Left cardiac atrium (tissue), 4 donors: ENCODE measurements at regions of chr16 and their contacts with region 1.

Region 1: DNA sequence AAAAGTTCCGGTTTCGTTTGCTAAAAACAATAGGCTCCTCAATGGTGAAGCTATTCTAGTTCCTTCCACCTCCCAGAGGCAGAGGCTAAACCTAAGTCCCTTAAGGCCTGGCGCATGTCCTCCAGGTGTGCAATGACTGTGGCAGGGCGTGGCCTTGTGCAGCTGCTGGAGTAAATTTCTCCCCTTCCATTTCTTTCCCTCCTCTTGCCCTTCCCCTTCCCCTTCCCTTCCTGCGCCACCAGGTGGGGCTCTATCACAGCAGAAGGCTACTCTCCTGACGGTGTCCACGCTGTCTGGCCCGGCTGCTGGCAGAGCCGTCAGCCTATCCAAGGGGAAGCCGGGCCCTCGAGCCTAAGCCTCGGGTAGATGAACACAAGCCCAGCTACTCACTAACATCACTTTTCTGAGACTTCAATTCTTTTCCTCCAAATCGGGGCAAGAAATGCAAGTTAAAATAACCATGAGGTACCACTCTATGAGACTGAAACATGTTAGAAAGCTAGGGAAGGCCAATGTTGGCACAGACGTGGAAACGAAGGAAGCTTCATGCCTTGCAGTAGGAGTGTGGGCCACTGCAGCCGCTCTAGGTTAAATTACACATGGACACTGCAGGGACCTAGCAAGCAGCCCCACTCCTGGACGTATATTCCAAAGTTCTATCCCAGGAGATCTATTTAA is 34.4 kb downstream of the C16orf78 start:
- DNase-seq: peak; percentile 89
- ATAC-seq: peak; percentile 98 to 99

Region 2: DNA sequence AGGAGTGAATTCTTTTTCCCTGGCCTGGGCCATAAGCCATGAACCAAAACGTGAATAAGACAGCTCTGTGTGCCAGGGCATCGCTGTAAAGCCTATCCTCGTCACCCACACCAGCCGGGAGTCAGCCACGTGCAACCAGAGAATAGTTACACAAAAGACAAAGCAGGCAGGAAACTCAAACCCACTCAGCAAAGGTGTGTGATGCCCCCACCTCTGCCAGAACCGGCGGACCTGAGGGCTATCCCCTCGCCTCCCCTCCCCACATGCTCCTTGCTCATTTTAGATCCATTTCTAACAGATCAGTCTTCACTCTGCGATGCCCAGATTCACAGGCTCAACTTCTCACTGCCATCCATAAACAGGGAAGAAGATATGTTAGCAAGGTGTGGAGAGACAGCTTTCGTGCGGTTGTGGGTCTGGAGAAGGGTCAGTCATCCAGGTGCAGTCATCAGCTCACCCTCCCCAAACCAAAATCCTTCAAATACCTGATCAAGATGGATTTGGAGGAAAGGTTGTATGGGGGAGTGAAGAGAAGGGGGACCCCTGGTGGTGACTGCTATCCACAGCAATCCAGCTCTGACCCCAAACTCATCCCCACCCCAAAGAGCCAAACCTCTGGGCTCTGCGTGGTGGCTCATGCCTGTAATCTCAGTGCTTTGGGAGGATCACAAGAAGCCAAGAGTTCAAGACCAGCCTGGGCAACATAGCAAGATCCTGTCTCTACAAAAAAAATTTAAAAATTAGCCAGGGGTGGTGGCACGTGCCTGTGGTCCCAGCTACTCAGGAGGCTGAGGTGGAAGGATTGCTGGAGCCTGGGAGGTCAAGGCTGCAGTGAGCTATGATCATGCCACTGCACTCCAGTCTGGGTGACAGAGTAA is 184.8 kb after region 1 on chr16:
- intact Hi-C with region 1: loop called (anchors 2 to 5 kb)
- DNase-seq: no peak
- ATAC-seq: peak in 1 of 2 donors; percentile 51

Region 3: DNA sequence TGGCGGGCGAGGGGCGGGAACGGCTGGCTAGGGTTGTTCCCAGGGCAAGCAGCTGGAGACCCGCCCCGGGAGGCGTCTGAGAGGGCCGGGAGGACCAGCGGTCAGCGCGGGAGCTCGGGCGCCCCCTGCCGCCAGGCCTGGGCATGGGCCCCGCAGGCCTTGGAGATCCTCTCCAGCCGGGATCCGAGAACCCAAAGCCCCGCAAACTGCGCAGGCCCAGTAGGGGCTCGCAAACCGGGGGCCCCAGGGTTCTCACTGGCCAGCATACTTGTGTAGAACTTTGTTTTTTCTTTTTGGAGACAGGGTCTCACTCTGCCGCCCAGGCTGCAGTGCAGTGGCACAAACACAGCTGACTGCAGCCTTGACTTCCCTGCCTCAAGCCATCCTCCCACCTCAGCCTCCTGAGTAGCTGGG is 468.7 kb after region 1 on chr16:
- intact Hi-C with region 1: loop called (anchors 5 to 10 kb)
- DNase-seq: peak; percentile 83
- ATAC-seq: peak; percentile 92 to 97

Region 4: GRCh38 chr16:49884033-49885015 is 476.3 kb after region 1 on chr16:
- intact Hi-C with region 1: loop called (anchors 5 to 10 kb)
- DNase-seq: no peak
- ATAC-seq: no peak

Region 5: GRCh38 chr16:49921791-49922456 is 513.9 kb after region 1 on chr16:
- intact Hi-C with region 1: loop called (anchors 2 to 5 kb)
- DNase-seq: peak; percentile 63
- ATAC-seq: peak; percentile 76 to 77